ENCODE measurements at regions of chr21 and their contacts with region 1.

Region 1: GRCh38 chr21:14602382-14602958 is 56.4 kb upstream of the SAMSN1 start:
- DNase-seq: no peak
- H3K4me3 Mint-ChIP-seq: no peak overlapping the region
- H3K27ac Mint-ChIP-seq: no peak overlapping the region
- H3K4me1 Mint-ChIP-seq: peaks cover 24% of the 10 kb centered on the region
- H3K27me3 Mint-ChIP-seq: no peaks in the 10 kb centered on the region

Region 2: DNA sequence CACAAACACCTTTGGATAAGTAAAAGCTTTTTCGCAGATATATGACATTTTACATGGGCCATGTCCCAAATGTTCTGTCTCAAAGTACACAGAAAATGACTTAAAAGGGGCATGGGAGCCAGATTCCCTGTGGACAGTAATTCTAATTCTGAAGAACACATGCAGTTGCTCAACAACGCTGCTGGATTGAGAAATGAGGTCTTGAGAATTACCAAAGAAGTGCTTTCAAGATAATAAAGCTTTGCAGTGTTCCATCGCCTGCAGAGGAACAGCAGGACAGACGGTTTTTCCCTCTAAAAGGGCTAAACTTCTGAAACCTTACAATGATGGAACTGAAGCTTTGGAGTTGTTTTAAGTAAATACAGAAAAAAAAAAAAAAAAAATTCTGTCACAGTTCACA is 164.3 kb before region 1 on chr21:
- CTCF ChIA-PET with region 1: no interaction called
- intact Hi-C with region 1: no loop called
- DNase-seq: no peak
- H3K4me3 Mint-ChIP-seq: no peak overlapping the region
- H3K27ac Mint-ChIP-seq: no peak overlapping the region
- H3K4me1 Mint-ChIP-seq: no peaks in the 10 kb centered on the region
- H3K27me3 Mint-ChIP-seq: peaks cover 1% of the 10 kb centered on the region

Region 3: DNA sequence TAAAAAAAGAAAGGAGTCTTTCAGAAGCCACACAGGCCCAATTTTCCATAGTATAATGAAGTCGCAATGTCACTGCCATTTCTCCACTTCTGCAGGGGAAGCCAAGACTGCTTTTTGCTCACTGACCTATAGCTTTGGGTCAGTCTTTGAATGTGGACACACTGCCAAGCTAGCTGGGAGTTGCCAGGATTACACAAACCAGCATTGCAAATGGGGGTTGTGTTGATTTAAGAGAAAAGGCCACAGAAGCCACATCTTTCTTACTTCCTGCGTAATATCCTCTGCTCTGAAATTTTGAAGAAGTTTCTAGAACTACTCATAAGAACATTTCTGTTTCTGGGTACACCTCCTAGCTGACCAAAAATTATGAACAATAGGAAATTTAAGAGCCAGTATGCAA is 10.6 kb before region 1 on chr21:
- CTCF ChIA-PET with region 1: no interaction called
- intact Hi-C with region 1: loop called (anchors 1 kb)
- DNase-seq: no peak
- H3K4me3 Mint-ChIP-seq: no peak overlapping the region
- H3K27ac Mint-ChIP-seq: no peak overlapping the region
- H3K4me1 Mint-ChIP-seq: peaks cover 19% of the 10 kb centered on the region
- H3K27me3 Mint-ChIP-seq: no peaks in the 10 kb centered on the region

Measured in activated naive CD4-positive, alpha-beta T cell treated with anti-CD3 and anti-CD28 coated beads for 36 hours (primary cell).